ENCODE measurements at regions of chr2 and their contacts with region 1.

Region 1: GRCh38 chr2:200713003-200713703 is 98.6 kb upstream of the BZW1 start:
- DNase-seq: peak; percentile 97
- H3K4me3 Mint-ChIP-seq: peak overlapping the region; percentile 74
- H3K27ac Mint-ChIP-seq: peak overlapping the region; percentile 99
- H3K4me1 Mint-ChIP-seq: peaks cover 29% of the 10 kb centered on the region
- H3K27me3 Mint-ChIP-seq: no peaks in the 10 kb centered on the region

Region 2: GRCh38 chr2:200677721-200678585 is 35.2 kb before region 1 on chr2:
- intact Hi-C with region 1: no loop called
- DNase-seq: no peak
- H3K4me3 Mint-ChIP-seq: no peak overlapping the region
- H3K27ac Mint-ChIP-seq: no peak overlapping the region
- H3K4me1 Mint-ChIP-seq: peaks cover 8% of the 10 kb centered on the region
- H3K27me3 Mint-ChIP-seq: peaks cover 13% of the 10 kb centered on the region

Region 3: GRCh38 chr2:200735061-200735460 is 21.9 kb after region 1 on chr2:
- intact Hi-C with region 1: loop called (anchors 1 kb)
- DNase-seq: no peak
- H3K4me3 Mint-ChIP-seq: no peak overlapping the region
- H3K27ac Mint-ChIP-seq: no peak overlapping the region
- H3K4me1 Mint-ChIP-seq: peaks cover 14% of the 10 kb centered on the region
- H3K27me3 Mint-ChIP-seq: peaks cover 9% of the 10 kb centered on the region

Region 4: GRCh38 chr2:200765139-200765951 is 52.2 kb after region 1 on chr2:
- intact Hi-C with region 1: loop called (anchors 1 kb)
- DNase-seq: peak; percentile 68
- H3K4me3 Mint-ChIP-seq: peak overlapping the region; percentile 39
- H3K27ac Mint-ChIP-seq: peak overlapping the region; percentile 90
- H3K4me1 Mint-ChIP-seq: peaks cover 27% of the 10 kb centered on the region
- H3K27me3 Mint-ChIP-seq: no peaks in the 10 kb centered on the region

Region 5: DNA sequence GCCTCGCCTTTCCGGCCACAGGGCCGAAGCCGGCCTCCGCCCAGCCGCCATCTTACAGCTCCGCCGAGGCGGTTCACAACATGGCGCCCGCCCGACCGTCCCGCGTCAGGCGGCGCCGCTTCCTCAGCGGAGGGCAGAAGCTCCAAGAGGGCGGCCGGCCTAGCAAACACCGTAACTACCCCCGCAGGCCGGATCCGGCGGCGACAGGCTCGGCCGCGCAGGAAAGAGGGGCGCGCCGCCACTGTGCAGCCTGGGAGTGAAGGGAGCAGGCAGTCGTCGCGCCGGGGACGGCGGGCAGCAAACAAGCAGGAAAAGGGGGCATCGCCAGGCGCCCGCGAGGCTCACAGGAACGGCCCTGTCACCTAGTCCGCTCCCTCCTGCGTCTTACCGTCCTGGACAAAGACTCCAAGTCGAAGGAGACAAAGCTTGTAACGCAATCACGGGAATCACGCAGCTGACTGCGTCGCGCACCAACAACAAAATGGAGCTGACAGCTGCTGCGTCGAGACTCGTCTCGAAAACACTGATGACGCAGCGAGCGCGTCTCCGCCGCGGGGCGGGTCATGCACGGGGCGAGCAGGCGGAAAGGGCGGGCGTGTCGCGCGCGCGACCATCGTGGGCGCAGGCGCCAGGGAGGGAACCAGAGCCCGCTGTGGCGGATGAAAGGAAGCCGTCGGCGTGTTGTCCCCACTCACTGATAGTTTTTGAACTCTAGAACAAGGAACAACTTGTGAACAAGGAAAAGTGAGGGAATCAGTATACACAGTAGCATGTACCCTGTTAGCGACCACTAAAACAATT is 151.2 kb after region 1 on chr2 and contains the start of gene CLK1:
- intact Hi-C with region 1: loop called (anchors 1 kb)
- DNase-seq: peak; percentile 99
- H3K4me3 Mint-ChIP-seq: peak within 1 kb of the TSS; percentile 91
- H3K27ac Mint-ChIP-seq: peak within 1 kb of the TSS; percentile 94
- H3K4me1 Mint-ChIP-seq: peaks cover 32% of the 10 kb centered on the region
- H3K27me3 Mint-ChIP-seq: no peaks in the 10 kb centered on the region
- total RNA-seq, gene CLK1: 99.3 and 100 TPM in 2 replicates

Region 6: DNA sequence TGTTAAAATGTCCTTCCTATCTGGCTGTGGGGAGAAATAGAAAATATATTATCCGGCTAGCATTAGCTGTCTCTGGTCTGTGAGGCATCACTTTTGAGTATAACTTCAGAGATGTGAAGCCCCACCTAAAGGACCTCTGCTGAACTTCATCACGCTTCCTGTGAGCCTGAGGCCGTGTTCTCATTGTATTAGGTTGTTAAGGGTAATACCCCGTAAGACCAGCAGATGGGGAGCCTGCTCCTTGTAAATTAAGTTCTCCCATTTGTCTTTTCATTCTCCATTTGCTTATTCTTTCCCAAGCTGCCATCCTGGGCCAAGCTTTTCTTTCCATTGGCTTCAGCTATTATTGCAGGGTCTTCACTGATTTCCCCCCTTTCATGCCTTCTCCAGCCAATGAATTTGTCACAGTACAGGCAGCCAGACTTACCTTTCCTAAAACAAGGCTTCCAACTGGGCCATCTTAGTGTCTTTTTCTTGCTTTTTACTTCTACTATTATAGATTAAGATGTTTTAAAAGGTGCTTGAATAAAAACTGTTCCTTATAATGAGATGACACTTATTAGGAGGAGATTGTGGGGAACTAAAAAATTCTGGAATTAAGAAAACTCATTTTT is 188.4 kb after region 1 on chr2:
- intact Hi-C with region 1: loop called (anchors 1 kb)
- DNase-seq: peak; percentile 92
- H3K4me3 Mint-ChIP-seq: no peak overlapping the region
- H3K27ac Mint-ChIP-seq: peak overlapping the region; percentile 61
- H3K4me1 Mint-ChIP-seq: peaks cover 19% of the 10 kb centered on the region
- H3K27me3 Mint-ChIP-seq: no peaks in the 10 kb centered on the region

Region 7: GRCh38 chr2:200963124-200963917 is 250.2 kb after region 1 on chr2 and contains the start of gene ORC2:
- intact Hi-C with region 1: loop called (anchors 2 kb)
- DNase-seq: peak; percentile 99
- H3K4me3 Mint-ChIP-seq: peak within 1 kb of the TSS; percentile 90
- H3K27ac Mint-ChIP-seq: peak within 1 kb of the TSS; percentile 96
- H3K4me1 Mint-ChIP-seq: peaks cover 45% of the 10 kb centered on the region
- H3K27me3 Mint-ChIP-seq: no peaks in the 10 kb centered on the region
- total RNA-seq, gene ORC2: 64.2 and 66.5 TPM in 2 replicates

Region 8: GRCh38 chr2:201171259-201171814 is 458.2 kb after region 1 on chr2:
- intact Hi-C with region 1: loop called (anchors 2 kb)
- DNase-seq: no peak
- H3K4me3 Mint-ChIP-seq: no peak overlapping the region
- H3K27ac Mint-ChIP-seq: no peak overlapping the region
- H3K4me1 Mint-ChIP-seq: peaks cover 7% of the 10 kb centered on the region
- H3K27me3 Mint-ChIP-seq: no peaks in the 10 kb centered on the region